ENCODE measurements at regions of chr2 and their contacts with region 1.

Region 1: GRCh38 chr2:113390124-113390849 is 47.2 kb upstream of the ZNG1B start:
- DNase-seq: peak; percentile 89
- ATAC-seq: peak; percentile 97
- H3K4me3 ChIP-seq: peak overlapping the region; percentile 15 to 59 (median 42)
- H3K4me3 Mint-ChIP-seq: peak overlapping the region; percentile 86
- H3K27ac ChIP-seq: peak overlapping the region; percentile 80 to 87
- H3K27ac Mint-ChIP-seq: peak overlapping the region; percentile 97
- H3K4me1 ChIP-seq: peaks cover 8% of the 10 kb centered on the region in 2 donors
- H3K4me1 Mint-ChIP-seq: peaks cover 14% of the 10 kb centered on the region
- H3K27me3 ChIP-seq: no peaks in the 10 kb centered on the region
- H3K27me3 Mint-ChIP-seq: no peaks in the 10 kb centered on the region
- CTCF ChIP-seq: peak; percentile 100

Region 2: DNA sequence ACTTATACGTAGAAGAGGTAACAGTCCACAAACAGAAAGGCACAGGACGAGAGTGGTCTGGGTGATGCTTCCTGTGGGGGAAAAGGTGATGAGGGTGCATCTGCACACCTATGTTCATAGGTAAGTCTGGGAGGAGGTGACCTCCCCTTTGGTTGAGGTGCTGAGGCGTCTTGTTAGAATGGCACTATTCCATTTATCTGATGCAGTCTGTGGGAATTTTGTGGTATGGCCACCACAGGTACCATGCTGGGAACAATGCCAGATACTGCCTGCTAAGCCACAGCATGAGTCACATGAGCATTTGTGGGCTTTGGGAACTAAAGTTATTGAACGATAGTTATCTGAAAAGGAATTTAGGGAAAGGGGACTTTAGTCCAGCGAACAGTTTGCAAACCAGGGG is 451.4 kb before region 1 on chr2:
- CTCF ChIA-PET with region 1: no interaction called
- POLR2A ChIA-PET with region 1: no interaction called
- intact Hi-C with region 1: no loop called
- DNase-seq: no peak
- ATAC-seq: no peak
- H3K4me3 ChIP-seq: no peak overlapping the region
- H3K4me3 Mint-ChIP-seq: no peak overlapping the region
- H3K27ac ChIP-seq: no peak overlapping the region
- H3K27ac Mint-ChIP-seq: no peak overlapping the region
- H3K4me1 ChIP-seq: no peaks in the 10 kb centered on the region
- H3K4me1 Mint-ChIP-seq: no peaks in the 10 kb centered on the region
- H3K27me3 ChIP-seq: peaks cover 0 to 5% (median 0%) of the 10 kb centered on the region in 4 experiments
- H3K27me3 Mint-ChIP-seq: peaks cover 9% of the 10 kb centered on the region
- CTCF ChIP-seq: no peak

Region 3: GRCh38 chr2:113080134-113080533 is 310.2 kb before region 1 on chr2:
- CTCF ChIA-PET with region 1: interaction called, 18 read pairs
- POLR2A ChIA-PET with region 1: no interaction called
- intact Hi-C with region 1: loop called (anchors 2 kb)
- DNase-seq: peak; percentile 59
- ATAC-seq: peak; percentile 51
- H3K4me3 ChIP-seq: no peak overlapping the region
- H3K4me3 Mint-ChIP-seq: no peak overlapping the region
- H3K27ac ChIP-seq: no peak overlapping the region
- H3K27ac Mint-ChIP-seq: no peak overlapping the region
- H3K4me1 ChIP-seq: no peaks in the 10 kb centered on the region
- H3K4me1 Mint-ChIP-seq: peaks cover 2% of the 10 kb centered on the region
- H3K27me3 ChIP-seq: peaks cover 0 to 14% (median 6%) of the 10 kb centered on the region in 4 experiments
- H3K27me3 Mint-ChIP-seq: peaks cover 39% of the 10 kb centered on the region
- CTCF ChIP-seq: peak; percentile 80

Region 4: DNA sequence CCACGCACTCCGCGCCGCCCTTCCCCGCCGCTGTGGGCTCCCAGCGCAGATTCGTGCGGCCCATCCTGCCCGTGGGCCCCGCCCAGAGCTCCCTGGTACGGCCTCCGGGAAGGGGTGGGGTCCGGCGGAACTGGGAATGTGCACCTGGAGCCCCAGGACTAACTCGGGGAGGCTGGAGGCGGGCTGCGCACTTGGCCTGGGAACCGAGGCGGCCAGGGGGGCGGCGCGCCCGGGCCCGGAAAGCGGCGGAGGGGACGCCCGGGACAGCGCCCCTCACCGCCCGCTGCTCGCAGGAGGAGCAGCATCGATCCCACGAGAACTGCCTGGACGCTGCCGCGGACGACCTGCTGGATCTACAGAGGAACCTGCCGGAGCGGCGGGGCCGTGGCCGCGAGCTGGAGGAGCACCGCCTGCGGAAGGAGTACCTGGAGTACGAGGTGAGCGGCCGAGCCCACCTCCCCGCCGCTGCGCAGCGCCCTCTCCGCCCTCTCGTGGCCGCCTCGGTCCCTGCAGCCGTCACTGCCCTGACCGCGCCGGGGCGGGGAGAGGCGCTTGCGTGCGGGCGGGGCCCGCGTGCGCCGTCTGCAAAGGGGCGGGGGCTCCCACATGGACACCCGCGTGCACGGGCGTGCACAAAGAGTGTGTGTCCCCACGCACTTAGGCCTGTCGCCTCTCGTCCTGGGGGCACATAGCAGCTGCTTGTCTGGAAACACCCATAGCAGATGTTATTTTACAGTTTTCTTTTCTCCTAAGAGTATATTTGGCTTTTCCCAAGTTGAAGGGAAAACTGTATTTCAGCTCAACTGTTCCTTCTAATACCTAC is 191.3 kb before region 1 on chr2:
- CTCF ChIA-PET with region 1: interaction called, 31 read pairs
- POLR2A ChIA-PET with region 1: no interaction called
- intact Hi-C with region 1: loop called (anchors 2 kb)
- DNase-seq: peak; percentile 86
- ATAC-seq: peak; percentile 90
- H3K4me3 ChIP-seq: peak overlapping the region in 4 of 5 experiments; percentile 11 to 47 (median 32)
- H3K4me3 Mint-ChIP-seq: peak overlapping the region; percentile 80
- H3K27ac ChIP-seq: peak overlapping the region in 1 of 2 donors; percentile 54
- H3K27ac Mint-ChIP-seq: peak overlapping the region; percentile 50
- H3K4me1 ChIP-seq: peaks cover 8 to 14% of the 10 kb centered on the region in 2 donors
- H3K4me1 Mint-ChIP-seq: peaks cover 9% of the 10 kb centered on the region
- H3K27me3 ChIP-seq: no peaks in the 10 kb centered on the region
- H3K27me3 Mint-ChIP-seq: no peaks in the 10 kb centered on the region
- CTCF ChIP-seq: peak; percentile 98

Region 5: DNA sequence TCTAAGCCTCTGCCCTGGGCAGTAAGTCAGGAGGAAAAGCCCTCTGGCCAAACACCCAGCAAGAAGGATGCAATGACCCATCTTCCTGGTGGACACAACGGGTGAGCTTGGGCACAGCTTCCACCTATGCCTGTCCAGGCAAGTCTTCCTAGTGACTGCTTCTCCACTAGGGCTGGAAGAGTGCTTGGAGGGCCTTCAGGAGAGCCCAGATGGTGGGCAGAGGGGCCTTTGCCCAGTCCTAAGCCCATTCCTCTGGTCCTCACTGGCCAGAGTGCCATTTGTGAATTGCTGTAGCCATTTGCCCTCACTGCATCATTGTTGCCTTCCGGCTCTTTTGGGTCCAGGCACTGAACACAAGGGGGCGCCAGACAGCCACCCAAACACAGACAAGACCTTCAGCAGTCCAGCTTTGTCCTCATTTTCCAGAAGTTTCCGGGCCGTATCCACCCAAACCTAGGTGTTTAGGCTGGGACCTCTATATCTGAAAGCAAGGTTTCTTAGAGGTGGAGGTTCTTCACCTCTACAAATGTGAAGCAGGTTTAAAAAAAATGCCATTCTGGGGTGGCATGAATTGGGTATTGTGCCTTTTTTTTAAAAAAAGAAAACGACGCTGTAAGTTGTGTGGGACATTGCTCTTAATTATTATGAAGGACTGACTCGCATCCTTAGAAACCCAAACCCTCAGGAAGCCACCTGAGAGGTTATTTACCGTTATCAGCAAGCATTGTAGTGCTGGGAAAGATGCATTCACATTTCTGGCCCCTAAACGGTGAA is 141.1 kb before region 1 on chr2:
- CTCF ChIA-PET with region 1: interaction called, 147 read pairs
- POLR2A ChIA-PET with region 1: no interaction called
- intact Hi-C with region 1: loop called (anchors 1 kb)
- DNase-seq: peak; percentile 84
- ATAC-seq: peak; percentile 58
- H3K4me3 ChIP-seq: no peak overlapping the region
- H3K4me3 Mint-ChIP-seq: no peak overlapping the region
- H3K27ac ChIP-seq: no peak overlapping the region
- H3K27ac Mint-ChIP-seq: peak overlapping the region; percentile 28
- H3K4me1 ChIP-seq: peaks cover 6 to 16% of the 10 kb centered on the region in 2 donors
- H3K4me1 Mint-ChIP-seq: peaks cover 13% of the 10 kb centered on the region
- H3K27me3 ChIP-seq: no peaks in the 10 kb centered on the region
- H3K27me3 Mint-ChIP-seq: no peaks in the 10 kb centered on the region
- CTCF ChIP-seq: peak; percentile 94

Region 6: DNA sequence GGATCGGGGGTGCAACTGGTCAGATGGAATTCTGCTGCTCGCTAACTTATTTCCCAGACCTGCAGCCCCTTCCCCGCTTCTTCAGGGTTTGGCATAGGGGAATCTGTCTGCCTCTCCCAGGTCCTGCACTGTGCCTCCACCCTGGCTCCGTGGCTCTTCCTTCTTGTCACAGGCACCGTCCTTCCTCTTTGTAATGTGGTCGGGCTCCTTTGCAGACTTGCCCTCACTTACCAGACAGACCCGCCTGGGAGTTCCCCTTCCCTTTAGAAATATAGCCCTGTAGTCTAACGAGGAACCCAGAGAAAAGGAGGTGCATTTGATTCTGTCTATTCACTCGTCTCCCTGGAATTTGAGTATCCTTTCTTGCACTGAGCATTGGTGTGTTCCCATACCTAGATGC is 47.6 kb before region 1 on chr2:
- CTCF ChIA-PET with region 1: no interaction called
- POLR2A ChIA-PET with region 1: no interaction called
- intact Hi-C with region 1: no loop called
- DNase-seq: peak; percentile 36
- ATAC-seq: no peak
- H3K4me3 ChIP-seq: no peak overlapping the region
- H3K4me3 Mint-ChIP-seq: no peak overlapping the region
- H3K27ac ChIP-seq: no peak overlapping the region
- H3K27ac Mint-ChIP-seq: no peak overlapping the region
- H3K4me1 ChIP-seq: peaks cover 0 to 7% of the 10 kb centered on the region in 2 donors
- H3K4me1 Mint-ChIP-seq: peaks cover 5% of the 10 kb centered on the region
- H3K27me3 ChIP-seq: peaks cover 0 to 10% (median 0%) of the 10 kb centered on the region in 4 experiments
- H3K27me3 Mint-ChIP-seq: peaks cover 23% of the 10 kb centered on the region
- CTCF ChIP-seq: no peak

Region 7: GRCh38 chr2:113370478-113371091 is 19.7 kb before region 1 on chr2:
- CTCF ChIA-PET with region 1: interaction called, 17 read pairs
- POLR2A ChIA-PET with region 1: no interaction called
- intact Hi-C with region 1: no loop called
- DNase-seq: peak; percentile 64
- ATAC-seq: peak; percentile 84
- H3K4me3 ChIP-seq: no peak overlapping the region
- H3K4me3 Mint-ChIP-seq: no peak overlapping the region
- H3K27ac ChIP-seq: no peak overlapping the region
- H3K27ac Mint-ChIP-seq: no peak overlapping the region
- H3K4me1 ChIP-seq: no peaks in the 10 kb centered on the region
- H3K4me1 Mint-ChIP-seq: peaks cover 14% of the 10 kb centered on the region
- H3K27me3 ChIP-seq: no peaks in the 10 kb centered on the region
- H3K27me3 Mint-ChIP-seq: no peaks in the 10 kb centered on the region
- CTCF ChIP-seq: peak; percentile 57

Region 8: GRCh38 chr2:113407446-113408099 is 17.3 kb after region 1 on chr2:
- CTCF ChIA-PET with region 1: interaction called, 3 read pairs
- POLR2A ChIA-PET with region 1: interaction called, 4 read pairs
- intact Hi-C with region 1: loop called (anchors 2 kb)
- DNase-seq: no peak
- ATAC-seq: no peak
- H3K4me3 ChIP-seq: peak overlapping the region in 2 of 5 experiments; percentile 52 to 60
- H3K4me3 Mint-ChIP-seq: peak overlapping the region; percentile 88
- H3K27ac ChIP-seq: peak overlapping the region in 1 of 2 donors; percentile 53
- H3K27ac Mint-ChIP-seq: peak overlapping the region; percentile 92
- H3K4me1 ChIP-seq: peaks cover 39 to 43% of the 10 kb centered on the region in 2 donors
- H3K4me1 Mint-ChIP-seq: peaks cover 45% of the 10 kb centered on the region
- H3K27me3 ChIP-seq: no peaks in the 10 kb centered on the region
- H3K27me3 Mint-ChIP-seq: no peaks in the 10 kb centered on the region
- CTCF ChIP-seq: no peak

Region 9: GRCh38 chr2:114265261-114265660 is 875.0 kb after region 1 on chr2:
- CTCF ChIA-PET with region 1: no interaction called
- POLR2A ChIA-PET with region 1: no interaction called
- intact Hi-C with region 1: no loop called
- DNase-seq: no peak
- ATAC-seq: no peak
- H3K4me3 ChIP-seq: no peak overlapping the region
- H3K4me3 Mint-ChIP-seq: no peak overlapping the region
- H3K27ac ChIP-seq: no peak overlapping the region
- H3K27ac Mint-ChIP-seq: no peak overlapping the region
- H3K4me1 ChIP-seq: no peaks in the 10 kb centered on the region
- H3K4me1 Mint-ChIP-seq: no peaks in the 10 kb centered on the region
- H3K27me3 ChIP-seq: no peaks in the 10 kb centered on the region
- H3K27me3 Mint-ChIP-seq: peaks cover 12% of the 10 kb centered on the region
- CTCF ChIP-seq: no peak